SK-N-SH (cell line): ENCODE measurements at regions of chr15 and their contacts with region 1.

Region 1: GRCh38 chr15:101127506-101128076 is 124.3 kb downstream of the CHSY1 start:
- DNase-seq: peak; percentile 90
- H3K4me3 ChIP-seq: peak overlapping the region; percentile 7 to 34; a peak in 3 of 4 replicates
- H3K27ac ChIP-seq: peak overlapping the region; percentile 95 to 100
- H3K4me1 ChIP-seq: peaks cover 31 to 40% of the 10 kb centered on the region in 2 experiments
- H3K27me3 ChIP-seq: no peaks in the 10 kb centered on the region
- CTCF ChIP-seq: no peak
- EP300 ChIP-seq: peak; percentile 72 to 89
- RAD21 ChIP-seq: no peak; the same call in 1 of the 2 replicates

Region 2: GRCh38 chr15:100869151-100869999 is 258.2 kb before region 1 on chr15:
- CTCF ChIA-PET with region 1: no interaction called
- POLR2A ChIA-PET with region 1: no interaction called
- DNase-seq: peak; percentile 47
- H3K4me3 ChIP-seq: no peak overlapping the region; a peak in 1 of 4 replicates
- H3K27ac ChIP-seq: no peak overlapping the region
- H3K4me1 ChIP-seq: peaks cover 0 to 5% of the 10 kb centered on the region in 2 experiments; a peak in 1 of 4 replicates
- H3K27me3 ChIP-seq: no peaks in the 10 kb centered on the region
- CTCF ChIP-seq: peak; percentile 57
- EP300 ChIP-seq: no peak
- RAD21 ChIP-seq: peak; percentile 51

Region 3: GRCh38 chr15:101088788-101089583 is 38.6 kb before region 1 on chr15:
- CTCF ChIA-PET with region 1: interaction called, 13 read pairs
- POLR2A ChIA-PET with region 1: no interaction called
- DNase-seq: peak; percentile 93
- H3K4me3 ChIP-seq: peak overlapping the region in 1 of 2 experiments; percentile 41; a peak in 1 of 4 replicates
- H3K27ac ChIP-seq: no peak overlapping the region
- H3K4me1 ChIP-seq: peaks cover 0 to 26% of the 10 kb centered on the region in 2 experiments; a peak in 1 of 4 replicates
- H3K27me3 ChIP-seq: no peaks in the 10 kb centered on the region
- CTCF ChIP-seq: peak; percentile 91
- EP300 ChIP-seq: no peak
- RAD21 ChIP-seq: peak; percentile 84